Right ventricle myocardium inferior (tissue), 1 donor: ENCODE measurements at regions of chr18 and their contacts with region 1.

Region 1: GRCh38 chr18:7617738-7618422 is 50.8 kb downstream of the PTPRM start:
- DNase-seq: no peak
- ATAC-seq: peak; percentile 62

Region 2: GRCh38 chr18:7584646-7585275 is 33.1 kb before region 1 on chr18:
- intact Hi-C with region 1: loop called (anchors 5 kb)
- DNase-seq: no peak
- ATAC-seq: peak; percentile 55

Region 3: GRCh38 chr18:7658712-7659111 is 40.8 kb after region 1 on chr18:
- intact Hi-C with region 1: loop called (anchors 5 kb)
- DNase-seq: no peak
- ATAC-seq: no peak

Region 4: DNA sequence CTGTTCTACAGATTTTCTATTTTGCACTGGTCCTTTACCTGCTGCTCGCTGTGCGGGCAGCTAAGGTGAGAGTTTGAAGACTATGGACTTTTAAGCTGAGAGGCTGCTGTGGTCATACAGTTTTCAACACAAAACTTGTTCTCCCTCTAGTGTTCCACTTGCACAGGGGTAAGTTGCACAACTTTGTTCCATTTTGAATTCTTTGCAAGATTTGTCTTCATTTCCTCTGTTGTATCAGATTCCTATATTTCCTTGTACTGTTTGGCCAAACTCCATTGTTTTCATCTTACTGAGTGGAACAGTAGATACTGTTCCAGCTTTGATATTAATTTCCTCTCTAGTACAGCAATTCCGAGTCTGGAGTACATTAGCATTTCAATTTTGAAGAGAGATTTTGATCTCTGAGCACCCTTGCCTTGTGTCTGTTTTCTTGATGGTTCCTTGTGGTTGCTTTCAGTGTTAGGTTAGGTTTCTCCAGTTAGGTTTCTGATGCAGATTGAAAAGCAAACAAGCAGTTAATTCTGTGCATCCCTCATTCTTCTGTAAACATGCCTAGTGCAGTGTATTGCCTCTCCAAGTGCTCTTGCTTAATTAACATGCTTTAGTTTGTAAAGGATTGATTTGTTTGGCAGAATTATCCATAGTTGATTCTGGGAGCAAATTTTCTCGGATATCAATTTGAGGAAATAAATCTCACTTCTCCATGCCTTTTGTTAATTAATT is 138.0 kb after region 1 on chr18:
- intact Hi-C with region 1: loop called (anchors 5 kb)
- DNase-seq: no peak
- ATAC-seq: peak; percentile 37